IMR-90 (cell line): ENCODE measurements at regions of chr6 and their contacts with region 1.

Region 1: GRCh38 chr6:139679516-139680179 is 305.2 kb upstream of the CITED2 start:
- DNase-seq: peak; percentile 45
- ATAC-seq: peak; percentile 66
- H3K4me3 ChIP-seq: no peak overlapping the region
- H3K27ac ChIP-seq: no peak overlapping the region
- H3K4me1 ChIP-seq: peaks cover 2% of the 10 kb centered on the region; the same call in 1 of the 2 replicates
- H3K27me3 ChIP-seq: no peaks in the 10 kb centered on the region
- CTCF ChIP-seq: no peak
- POLR2A ChIP-seq: no peak
- RAD21 ChIP-seq: no peak

Region 2: DNA sequence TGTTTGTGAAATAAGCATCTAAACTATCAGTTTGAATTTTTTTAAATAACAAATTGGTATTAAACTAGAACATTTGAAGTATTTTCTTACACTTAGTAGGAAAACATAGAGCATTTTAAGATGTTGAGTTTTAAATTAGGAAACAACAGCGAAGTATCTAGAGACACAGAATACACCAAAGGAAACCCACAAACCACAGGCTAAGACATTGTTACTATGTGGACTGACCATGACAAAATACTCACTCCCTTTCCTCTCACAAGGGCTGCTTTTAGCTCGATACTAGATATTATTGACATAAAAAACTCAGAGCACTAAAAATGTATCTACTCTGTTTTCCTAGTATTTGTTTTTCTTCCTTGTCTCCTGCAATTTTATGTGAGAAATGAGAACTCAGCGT is 39.2 kb before region 1 on chr6:
- CTCF ChIA-PET with region 1: no interaction called
- POLR2A ChIA-PET with region 1: no interaction called
- dilution Hi-C with region 1: no loop called
- in situ Hi-C with region 1: no loop called
- intact Hi-C with region 1: loop called (anchors 5 kb)
- DNase-seq: no peak
- ATAC-seq: no peak
- H3K4me3 ChIP-seq: no peak overlapping the region
- H3K27ac ChIP-seq: no peak overlapping the region
- H3K4me1 ChIP-seq: peaks cover 2% of the 10 kb centered on the region; the same call in 1 of the 2 replicates
- H3K27me3 ChIP-seq: no peaks in the 10 kb centered on the region
- CTCF ChIP-seq: no peak
- POLR2A ChIP-seq: no peak
- RAD21 ChIP-seq: no peak

Region 3: DNA sequence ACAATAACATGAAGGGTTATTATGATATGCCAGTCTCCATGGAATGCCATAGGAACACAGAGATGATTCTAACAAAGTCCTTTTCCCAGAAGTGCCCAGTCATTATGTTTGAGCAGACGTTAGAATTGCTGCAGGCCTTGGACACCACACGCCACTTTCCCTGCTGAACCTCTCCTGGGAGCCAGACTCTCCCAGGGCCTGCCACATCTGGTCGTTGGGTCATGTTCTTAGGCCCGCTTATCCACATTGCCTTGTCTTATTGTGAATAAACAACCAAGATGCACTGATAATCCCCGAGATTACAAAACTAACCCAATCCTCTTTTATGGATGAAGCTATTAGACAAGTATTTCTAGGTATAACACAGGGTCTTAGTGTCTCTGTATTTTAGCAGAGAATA is 28.7 kb before region 1 on chr6:
- CTCF ChIA-PET with region 1: no interaction called
- POLR2A ChIA-PET with region 1: no interaction called
- dilution Hi-C with region 1: no loop called
- in situ Hi-C with region 1: no loop called
- intact Hi-C with region 1: no loop called
- DNase-seq: no peak
- ATAC-seq: no peak
- H3K4me3 ChIP-seq: no peak overlapping the region
- H3K27ac ChIP-seq: no peak overlapping the region
- H3K4me1 ChIP-seq: no peaks in the 10 kb centered on the region
- H3K27me3 ChIP-seq: no peaks in the 10 kb centered on the region
- CTCF ChIP-seq: no peak
- POLR2A ChIP-seq: no peak
- RAD21 ChIP-seq: no peak